Activated CD4-positive, alpha-beta T cell treated with anti-CD3 and anti-CD28 coated beads, Interleukin-2, amount 10 ng/mL, durations not matched to agents 7 days and 5 days (primary cell): ENCODE measurements at regions of chr11 and their contacts with region 1.

Region 1: DNA sequence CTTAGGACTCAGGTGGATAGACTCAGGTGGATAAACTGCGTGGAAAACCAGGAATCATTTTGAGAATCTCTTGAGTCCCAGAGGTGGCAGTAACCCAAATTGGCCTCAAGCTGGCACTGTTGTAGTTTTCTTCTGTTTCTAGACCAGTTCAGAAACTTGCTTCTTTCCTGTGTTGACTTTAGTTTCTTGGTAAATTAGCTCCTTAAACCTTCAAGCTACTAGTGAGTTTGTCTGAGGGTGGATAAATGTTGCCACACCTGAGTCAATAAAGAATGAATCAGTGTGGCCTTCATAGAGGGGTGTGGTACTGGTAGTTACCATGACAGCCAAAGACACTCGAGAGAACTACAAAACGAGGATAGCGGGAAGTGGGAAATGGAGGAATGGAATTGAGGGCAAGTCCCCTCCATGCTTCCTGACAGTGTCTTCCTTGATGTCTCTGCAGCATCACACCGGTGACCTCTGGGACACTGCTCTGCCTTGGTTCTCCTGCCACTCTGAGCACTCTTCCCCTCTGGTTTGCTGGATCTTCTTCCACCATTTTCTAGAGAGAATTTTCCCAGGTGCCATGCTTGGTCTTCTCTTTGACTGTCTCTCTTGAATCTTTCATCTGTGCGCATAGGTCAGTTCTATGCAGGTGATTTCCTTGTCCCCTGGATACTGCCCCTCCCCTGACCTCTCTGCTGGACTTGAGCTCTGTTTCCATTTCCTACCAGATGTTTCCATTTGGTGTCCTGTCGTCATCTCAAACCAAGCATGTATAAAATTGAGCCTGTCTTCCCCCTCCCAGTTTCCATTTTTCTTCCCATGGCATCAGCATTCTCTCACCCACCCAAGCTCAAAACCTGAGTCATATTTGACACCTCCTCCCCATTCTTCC is 7.2 kb downstream of the POLD4 start:
- DNase-seq: peak; percentile 36
- H3K4me3 Mint-ChIP-seq: no peak overlapping the region
- H3K27ac Mint-ChIP-seq: peak overlapping the region; percentile 37
- H3K4me1 Mint-ChIP-seq: peaks cover 34% of the 10 kb centered on the region
- H3K27me3 Mint-ChIP-seq: no peaks in the 10 kb centered on the region

Region 2: GRCh38 chr11:67371212-67371910 is 25.2 kb after region 1 on chr11:
- CTCF ChIA-PET with region 1: interaction called, 841 read pairs
- POLR2A ChIA-PET with region 1: interaction called, 3 read pairs
- DNase-seq: peak; percentile 24
- H3K4me3 Mint-ChIP-seq: peak overlapping the region; percentile 45
- H3K27ac Mint-ChIP-seq: no peak overlapping the region
- H3K4me1 Mint-ChIP-seq: peaks cover 39% of the 10 kb centered on the region
- H3K27me3 Mint-ChIP-seq: peaks cover 65% of the 10 kb centered on the region

Region 3: DNA sequence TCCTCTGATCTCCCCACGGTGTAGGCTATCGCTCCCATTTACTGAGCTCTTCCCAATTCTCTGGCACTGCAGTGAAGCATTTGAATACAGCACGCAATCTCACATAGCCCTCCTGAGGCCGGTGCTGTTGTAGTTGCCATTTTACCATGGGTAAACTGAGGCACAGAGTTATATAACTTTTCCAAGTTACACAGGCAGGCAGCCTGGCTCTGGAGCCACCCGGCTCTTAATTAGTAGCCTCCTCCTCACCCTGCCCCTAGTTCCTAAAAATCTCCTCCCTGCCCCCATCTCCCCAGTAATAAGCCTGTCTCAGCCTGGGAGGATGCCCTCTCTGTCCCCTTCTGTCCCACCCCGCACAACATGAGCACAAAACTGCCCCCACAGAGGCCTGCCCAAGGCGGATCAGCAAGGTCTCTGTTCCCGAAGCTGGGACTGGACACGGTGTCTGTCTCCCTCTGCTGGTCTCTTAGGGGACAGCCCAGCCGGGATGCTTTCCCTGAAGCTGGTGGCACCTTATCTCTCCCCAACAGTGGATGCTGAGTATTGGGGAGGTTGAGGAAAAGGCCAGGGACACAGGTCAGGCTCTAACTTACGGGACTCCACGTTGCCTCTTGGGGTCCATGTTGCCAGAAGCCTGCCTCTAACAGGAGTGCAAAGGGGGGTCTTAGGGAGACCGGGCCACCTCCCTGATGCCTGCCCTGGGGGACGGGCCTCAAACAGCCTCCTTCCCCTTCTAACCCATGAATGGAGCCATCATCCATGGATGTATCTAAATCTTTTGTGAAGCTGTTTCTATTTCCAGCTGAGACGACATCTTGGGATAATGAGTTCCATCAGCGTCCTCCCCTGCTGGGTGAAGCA is 36.3 kb after region 1 on chr11:
- CTCF ChIA-PET with region 1: interaction called, 841 read pairs
- POLR2A ChIA-PET with region 1: no interaction called
- DNase-seq: peak; percentile 87
- H3K4me3 Mint-ChIP-seq: no peak overlapping the region
- H3K27ac Mint-ChIP-seq: no peak overlapping the region
- H3K4me1 Mint-ChIP-seq: peaks cover 6% of the 10 kb centered on the region
- H3K27me3 Mint-ChIP-seq: peaks cover 28% of the 10 kb centered on the region